HEK293T (cell line): ENCODE measurements at regions of chr11 and their contacts with region 1.

Region 1: GRCh38 chr11:124875943-124876817 is 10.9 kb downstream of the ROBO3 start:
- DNase-seq: peak; percentile 90

Region 2: GRCh38 chr11:124865921-124866583 is 10.1 kb before region 1 on chr11:
- CTCF ChIA-PET with region 1: interaction called, 13 read pairs
- POLR2A ChIA-PET with region 1: interaction called, 23 read pairs
- DNase-seq: peak; percentile 83

Region 3: GRCh38 chr11:124891373-124891861 is 15.2 kb after region 1 on chr11:
- CTCF ChIA-PET with region 1: interaction called, 8 read pairs
- POLR2A ChIA-PET with region 1: interaction called, 14 read pairs
- DNase-seq: no peak

Region 4: GRCh38 chr11:124953753-124954589 is 77.8 kb after region 1 on chr11 and contains the start of gene CCDC15:
- CTCF ChIA-PET with region 1: interaction called, 3 read pairs
- POLR2A ChIA-PET with region 1: interaction called, 23 read pairs
- DNase-seq: peak; percentile 95

Region 5: DNA sequence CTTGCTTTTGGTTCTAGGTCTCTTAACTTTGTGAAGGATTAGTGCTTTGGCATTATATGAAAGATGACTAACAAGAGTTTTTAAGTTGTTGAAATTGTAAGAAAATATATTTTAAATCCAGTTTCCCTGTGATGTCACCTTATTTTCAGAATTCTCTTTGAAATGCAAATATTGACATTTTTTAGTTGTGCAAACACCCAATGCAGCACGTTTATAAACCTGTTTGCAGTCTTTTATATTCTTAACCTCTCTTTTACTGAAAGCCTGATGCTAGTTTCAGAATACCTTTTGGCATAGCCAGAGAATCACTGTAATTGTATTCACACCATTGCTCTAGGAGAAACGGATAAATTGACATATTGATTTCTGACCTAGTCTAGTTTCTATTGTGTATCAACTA is 144.2 kb after region 1 on chr11:
- CTCF ChIA-PET with region 1: no interaction called
- POLR2A ChIA-PET with region 1: no interaction called
- DNase-seq: no peak